AG04449 (cell line): ENCODE measurements at regions of chr10 and their contacts with region 1.

Region 1: GRCh38 chr10:120942806-120943413 is 91.7 kb downstream of the WDR11 start:
- DNase-seq: peak; percentile 10
- H3K4me3 ChIP-seq: no peak overlapping the region; the same call in 1 of the 2 replicates
- CTCF ChIP-seq: peak; percentile 96

Region 2: DNA sequence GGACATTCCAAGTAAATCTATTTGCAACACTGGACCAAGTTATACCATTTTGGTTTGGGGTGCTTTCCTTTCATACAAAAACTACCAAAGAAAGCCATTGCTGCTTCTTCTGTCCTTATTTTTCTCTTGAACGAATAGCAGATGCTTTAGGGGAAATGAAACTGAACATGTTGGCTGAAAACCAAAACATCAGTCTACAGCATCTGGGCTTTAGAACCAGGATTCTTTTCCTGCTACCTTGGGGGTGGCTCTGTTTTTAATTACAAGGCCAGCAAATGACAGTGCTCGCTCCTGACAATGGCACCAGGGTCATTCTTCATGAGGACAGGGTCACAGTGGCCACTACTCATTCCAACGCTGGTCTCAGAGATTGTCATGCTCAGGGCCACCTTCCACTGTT is 11.5 kb before region 1 on chr10:
- CTCF ChIA-PET with region 1: interaction called, 13 read pairs
- POLR2A ChIA-PET with region 1: no interaction called
- DNase-seq: no peak
- H3K4me3 ChIP-seq: no peak overlapping the region
- CTCF ChIP-seq: no peak

Region 3: GRCh38 chr10:121734589-121735045 is 791.7 kb after region 1 on chr10:
- CTCF ChIA-PET with region 1: interaction called, 25 read pairs
- POLR2A ChIA-PET with region 1: no interaction called
- DNase-seq: no peak
- H3K4me3 ChIP-seq: no peak overlapping the region
- CTCF ChIP-seq: peak; percentile 47

Region 4: GRCh38 chr10:121880895-121881294 is 938.0 kb after region 1 on chr10:
- CTCF ChIA-PET with region 1: interaction called, 125 read pairs
- POLR2A ChIA-PET with region 1: no interaction called
- DNase-seq: no peak
- H3K4me3 ChIP-seq: no peak overlapping the region
- CTCF ChIP-seq: no peak

Region 5: DNA sequence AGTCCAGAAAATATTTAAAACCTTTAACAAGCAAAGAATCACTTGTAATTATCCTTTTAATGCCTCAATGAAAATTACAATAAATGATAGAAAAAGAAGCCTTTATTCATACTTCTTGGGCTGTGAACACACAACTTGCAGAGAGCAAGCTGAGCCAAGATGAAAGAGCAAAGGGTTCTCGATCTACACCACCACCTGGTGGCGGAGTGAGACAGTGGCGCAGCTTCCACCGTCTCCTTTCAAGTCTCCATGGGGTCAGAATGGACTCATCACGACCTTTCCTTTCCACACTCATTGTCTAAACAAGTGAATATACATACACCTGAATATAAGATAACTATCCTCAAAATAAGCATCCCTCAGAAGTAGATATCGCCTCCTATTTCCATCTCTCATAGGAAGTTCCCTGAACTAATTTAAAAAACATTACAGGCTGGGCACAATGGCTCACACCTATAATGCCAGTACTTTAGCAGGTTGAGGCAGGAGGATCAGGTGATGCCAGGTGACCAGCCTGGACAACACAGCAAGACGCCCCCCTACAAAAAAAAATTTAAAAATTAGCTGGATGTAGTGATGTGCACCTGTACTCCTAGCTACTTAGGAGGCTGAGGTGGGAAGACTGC is 944.2 kb after region 1 on chr10:
- CTCF ChIA-PET with region 1: interaction called, 125 read pairs
- POLR2A ChIA-PET with region 1: no interaction called
- DNase-seq: peak; percentile 24
- H3K4me3 ChIP-seq: no peak overlapping the region
- CTCF ChIP-seq: peak; percentile 88

Region 6: GRCh38 chr10:121900443-121901174 is 957.7 kb after region 1 on chr10:
- CTCF ChIA-PET with region 1: interaction called, 88 read pairs
- POLR2A ChIA-PET with region 1: no interaction called
- DNase-seq: peak; percentile 19
- H3K4me3 ChIP-seq: no peak overlapping the region
- CTCF ChIP-seq: peak; percentile 59